WTC11 (cell line): ENCODE measurements at regions of chr13 and their contacts with region 1.

Region 1: GRCh38 chr13:35630551-35631275 is 154.2 kb upstream of the MAB21L1 start:
- DNase-seq: peak; percentile 28
- ATAC-seq: peak; percentile 100
- H3K4me3 Mint-ChIP-seq: no peak overlapping the region
- H3K27ac Mint-ChIP-seq: no peak overlapping the region
- H3K4me1 Mint-ChIP-seq: peaks cover 4% of the 10 kb centered on the region
- H3K27me3 Mint-ChIP-seq: no peaks in the 10 kb centered on the region
- CTCF ChIP-seq: peak; percentile 40; the same call in 1 of the 2 replicates

Region 2: GRCh38 chr13:35643625-35644024 is 12.9 kb after region 1 on chr13:
- CTCF ChIA-PET with region 1: interaction called, 11 read pairs
- POLR2A ChIA-PET with region 1: no interaction called
- DNase-seq: no peak
- ATAC-seq: no peak
- H3K4me3 Mint-ChIP-seq: no peak overlapping the region
- H3K27ac Mint-ChIP-seq: no peak overlapping the region
- H3K4me1 Mint-ChIP-seq: no peaks in the 10 kb centered on the region
- H3K27me3 Mint-ChIP-seq: no peaks in the 10 kb centered on the region
- CTCF ChIP-seq: no peak